H1 (cell line): ENCODE measurements at regions of chr11 and their contacts with region 1.

Region 1: GRCh38 chr11:111454561-111455192 is 57.5 kb downstream of the BTG4 start:
- DNase-seq: peak in 1 of 2 experiments; percentile 88
- H3K4me3 ChIP-seq: peak overlapping the region; percentile 6 to 56 (median 22); a peak in 6 of 8 replicates
- H3K27ac ChIP-seq: no peak overlapping the region
- H3K4me1 ChIP-seq: peaks cover 0 to 7% (median 4%) of the 10 kb centered on the region in 4 experiments; a peak in 3 of 7 replicates
- H3K27me3 ChIP-seq: no peaks in the 10 kb centered on the region
- CTCF ChIP-seq: peak; percentile 48 to 62 (median 56)
- EP300 ChIP-seq: no peak
- POLR2A ChIP-seq: no peak
- RAD21 ChIP-seq: peak; percentile 61 to 67

Region 2: GRCh38 chr11:111512296-111513239 is 57.9 kb after region 1 on chr11 and contains the start of gene BTG4:
- CTCF ChIA-PET with region 1: interaction called, 22 read pairs
- POLR2A ChIA-PET with region 1: no interaction called
- DNase-seq: peak in 1 of 2 experiments; percentile 65
- H3K4me3 ChIP-seq: peak within 1 kb of the TSS; percentile 34 to 77 (median 46)
- H3K27ac ChIP-seq: no peak within 1 kb of the TSS
- H3K4me1 ChIP-seq: peaks cover 0 to 10% (median 6%) of the 10 kb centered on the region in 4 experiments; a peak in 5 of 7 replicates
- H3K27me3 ChIP-seq: peaks cover 11 to 38% (median 26%) of the 10 kb centered on the region in 4 experiments
- CTCF ChIP-seq: no peak; a peak in 1 of 4 replicates
- EP300 ChIP-seq: no peak
- POLR2A ChIP-seq: no peak; a peak in 1 of 3 replicates
- RAD21 ChIP-seq: no peak
- total RNA-seq, gene BTG4: not detected in 2 replicates

Region 3: DNA sequence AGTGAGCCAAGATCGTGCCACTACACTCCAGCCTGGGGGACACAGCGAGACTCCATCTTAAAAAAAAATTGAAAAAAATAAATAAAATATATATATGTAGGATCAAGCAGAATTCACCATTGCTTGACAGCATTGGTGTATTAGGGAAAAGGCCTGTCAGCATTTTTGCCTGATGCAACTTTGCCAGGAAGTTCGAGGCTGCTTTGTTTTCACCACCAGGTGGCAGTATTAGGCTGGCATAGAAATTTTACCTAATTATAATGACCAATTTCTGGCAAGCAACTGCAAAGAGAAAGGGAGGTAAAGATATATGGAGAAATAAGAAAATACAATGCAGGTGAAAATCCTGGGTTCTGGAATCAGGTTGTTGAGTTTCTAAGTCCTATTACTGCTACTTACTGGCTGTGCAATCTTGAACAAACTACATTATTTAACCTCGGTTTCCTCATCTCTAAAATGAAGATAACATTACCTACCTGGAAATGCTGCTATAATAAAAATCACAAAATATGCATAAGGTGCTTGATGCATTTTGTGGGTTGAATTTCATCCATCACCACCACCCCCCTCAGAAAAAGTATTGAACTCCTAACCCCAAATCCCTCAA is 110.5 kb after region 1 on chr11:
- CTCF ChIA-PET with region 1: interaction called, 15 read pairs
- POLR2A ChIA-PET with region 1: no interaction called
- DNase-seq: peak in 1 of 2 experiments; percentile 72
- H3K4me3 ChIP-seq: no peak overlapping the region
- H3K27ac ChIP-seq: no peak overlapping the region
- H3K4me1 ChIP-seq: peaks cover 0 to 6% (median 4%) of the 10 kb centered on the region in 4 experiments; a peak in 4 of 7 replicates
- H3K27me3 ChIP-seq: no peaks in the 10 kb centered on the region
- CTCF ChIP-seq: peak; percentile 6 to 74 (median 72)
- EP300 ChIP-seq: no peak
- POLR2A ChIP-seq: no peak
- RAD21 ChIP-seq: peak; percentile 81 to 84